IMR-90 (cell line): ENCODE measurements at regions of chr7 and their contacts with region 1.

Region 1: GRCh38 chr7:82305347-82306005 is 138.1 kb downstream of the CACNA2D1 start:
- DNase-seq: no peak
- ATAC-seq: no peak
- H3K4me3 ChIP-seq: no peak overlapping the region
- H3K27ac ChIP-seq: no peak overlapping the region
- H3K4me1 ChIP-seq: no peaks in the 10 kb centered on the region
- H3K27me3 ChIP-seq: no peaks in the 10 kb centered on the region
- CTCF ChIP-seq: no peak
- POLR2A ChIP-seq: no peak
- RAD21 ChIP-seq: no peak

Region 2: DNA sequence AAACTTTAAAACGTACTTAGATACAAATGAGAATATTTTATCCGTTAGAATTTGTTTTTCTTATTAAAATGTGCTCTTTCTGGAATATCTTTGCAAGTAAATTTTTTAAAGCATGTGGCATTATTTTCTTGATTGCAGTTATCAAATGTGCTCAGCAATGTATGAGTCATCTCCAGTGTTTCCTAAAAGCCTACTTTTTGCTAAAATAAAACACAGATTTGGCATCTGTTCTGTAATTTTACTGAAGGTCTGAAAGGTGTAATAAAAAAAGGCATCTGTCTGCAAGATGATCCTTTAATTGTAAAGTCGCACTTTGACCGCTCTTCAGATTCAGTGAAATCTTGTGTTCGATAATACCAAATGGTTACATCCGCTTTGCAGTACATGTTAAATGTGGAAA is 1797.0 kb before region 1 on chr7:
- CTCF ChIA-PET with region 1: no interaction called
- POLR2A ChIA-PET with region 1: no interaction called
- dilution Hi-C with region 1: no loop called
- in situ Hi-C with region 1: no loop called
- intact Hi-C with region 1: loop called (anchors 5 kb)
- DNase-seq: peak; percentile 52
- ATAC-seq: no peak
- H3K4me3 ChIP-seq: no peak overlapping the region
- H3K27ac ChIP-seq: no peak overlapping the region
- H3K4me1 ChIP-seq: no peaks in the 10 kb centered on the region
- H3K27me3 ChIP-seq: no peaks in the 10 kb centered on the region
- CTCF ChIP-seq: no peak
- POLR2A ChIP-seq: no peak
- RAD21 ChIP-seq: no peak

Region 3: GRCh38 chr7:81715984-81716588 is 589.4 kb before region 1 on chr7:
- CTCF ChIA-PET with region 1: no interaction called
- POLR2A ChIA-PET with region 1: no interaction called
- dilution Hi-C with region 1: no loop called
- in situ Hi-C with region 1: no loop called
- intact Hi-C with region 1: no loop called
- DNase-seq: peak; percentile 53
- ATAC-seq: peak; percentile 54
- H3K4me3 ChIP-seq: no peak overlapping the region
- H3K27ac ChIP-seq: no peak overlapping the region
- H3K4me1 ChIP-seq: no peaks in the 10 kb centered on the region
- H3K27me3 ChIP-seq: no peaks in the 10 kb centered on the region
- CTCF ChIP-seq: peak; percentile 48
- POLR2A ChIP-seq: no peak
- RAD21 ChIP-seq: peak; percentile 69

Region 4: GRCh38 chr7:82762880-82763279 is 457.4 kb after region 1 on chr7:
- CTCF ChIA-PET with region 1: no interaction called
- POLR2A ChIA-PET with region 1: no interaction called
- dilution Hi-C with region 1: no loop called
- in situ Hi-C with region 1: no loop called
- intact Hi-C with region 1: no loop called
- DNase-seq: peak; percentile 47
- ATAC-seq: peak; percentile 86
- H3K4me3 ChIP-seq: no peak overlapping the region
- H3K27ac ChIP-seq: peak overlapping the region; percentile 7; the same call in 1 of the 2 replicates
- H3K4me1 ChIP-seq: 0 out of 2 replicates have a peak, but pooled peaks cover 2% of the 10 kb centered on the region
- H3K27me3 ChIP-seq: no peaks in the 10 kb centered on the region
- CTCF ChIP-seq: no peak
- POLR2A ChIP-seq: no peak
- RAD21 ChIP-seq: no peak